Endothelial cell of umbilical vein (primary cell): ENCODE measurements at regions of chr22 and their contacts with region 1.

Region 1: GRCh38 chr22:39319270-39320022 is at the start of gene RPL3:
- DNase-seq: peak; percentile 99
- H3K4me3 ChIP-seq: peak within 1 kb of the TSS; percentile 87 to 98 (median 96)
- H3K27ac ChIP-seq: peak within 1 kb of the TSS; percentile 96
- H3K4me1 ChIP-seq: peaks cover 30% of the 10 kb centered on the region
- H3K27me3 ChIP-seq: no peaks in the 10 kb centered on the region
- CTCF ChIP-seq: peak in 1 of 2 donors; percentile 5
- POLR2A ChIP-seq: peak; percentile 100
- total RNA-seq, gene RPL3: 1,954 and 2,068 TPM in 2 replicates

Region 2: GRCh38 chr22:39003165-39003638 is 316.2 kb before region 1 on chr22:
- CTCF ChIA-PET with region 1: no interaction called
- POLR2A ChIA-PET with region 1: no interaction called
- dilution Hi-C with region 1: no loop called
- intact Hi-C with region 1: loop called (anchors 10 kb)
- DNase-seq: peak; percentile 83
- H3K4me3 ChIP-seq: no peak overlapping the region
- H3K27ac ChIP-seq: no peak overlapping the region
- H3K4me1 ChIP-seq: no peaks in the 10 kb centered on the region
- H3K27me3 ChIP-seq: no peaks in the 10 kb centered on the region
- CTCF ChIP-seq: peak; percentile 67 to 72
- POLR2A ChIP-seq: no peak

Region 3: GRCh38 chr22:39170825-39171622 is 148.4 kb before region 1 on chr22:
- CTCF ChIA-PET with region 1: interaction called, 52 read pairs
- POLR2A ChIA-PET with region 1: interaction called, 7 read pairs
- dilution Hi-C with region 1: no loop called
- intact Hi-C with region 1: loop called (anchors 1 kb)
- DNase-seq: peak; percentile 76
- H3K4me3 ChIP-seq: no peak overlapping the region
- H3K27ac ChIP-seq: peak overlapping the region; percentile 51
- H3K4me1 ChIP-seq: peaks cover 48% of the 10 kb centered on the region
- H3K27me3 ChIP-seq: no peaks in the 10 kb centered on the region
- CTCF ChIP-seq: peak; percentile 86 to 94
- POLR2A ChIP-seq: no peak

Region 4: GRCh38 chr22:39236321-39237317 is 82.8 kb before region 1 on chr22:
- CTCF ChIA-PET with region 1: interaction called, 34 read pairs
- POLR2A ChIA-PET with region 1: interaction called, 31 read pairs
- dilution Hi-C with region 1: no loop called
- intact Hi-C with region 1: no loop called
- DNase-seq: no peak
- H3K4me3 ChIP-seq: no peak overlapping the region
- H3K27ac ChIP-seq: peak overlapping the region; percentile 88
- H3K4me1 ChIP-seq: peaks cover 91% of the 10 kb centered on the region
- H3K27me3 ChIP-seq: no peaks in the 10 kb centered on the region
- CTCF ChIP-seq: no peak
- POLR2A ChIP-seq: peak; percentile 19

Region 5: DNA sequence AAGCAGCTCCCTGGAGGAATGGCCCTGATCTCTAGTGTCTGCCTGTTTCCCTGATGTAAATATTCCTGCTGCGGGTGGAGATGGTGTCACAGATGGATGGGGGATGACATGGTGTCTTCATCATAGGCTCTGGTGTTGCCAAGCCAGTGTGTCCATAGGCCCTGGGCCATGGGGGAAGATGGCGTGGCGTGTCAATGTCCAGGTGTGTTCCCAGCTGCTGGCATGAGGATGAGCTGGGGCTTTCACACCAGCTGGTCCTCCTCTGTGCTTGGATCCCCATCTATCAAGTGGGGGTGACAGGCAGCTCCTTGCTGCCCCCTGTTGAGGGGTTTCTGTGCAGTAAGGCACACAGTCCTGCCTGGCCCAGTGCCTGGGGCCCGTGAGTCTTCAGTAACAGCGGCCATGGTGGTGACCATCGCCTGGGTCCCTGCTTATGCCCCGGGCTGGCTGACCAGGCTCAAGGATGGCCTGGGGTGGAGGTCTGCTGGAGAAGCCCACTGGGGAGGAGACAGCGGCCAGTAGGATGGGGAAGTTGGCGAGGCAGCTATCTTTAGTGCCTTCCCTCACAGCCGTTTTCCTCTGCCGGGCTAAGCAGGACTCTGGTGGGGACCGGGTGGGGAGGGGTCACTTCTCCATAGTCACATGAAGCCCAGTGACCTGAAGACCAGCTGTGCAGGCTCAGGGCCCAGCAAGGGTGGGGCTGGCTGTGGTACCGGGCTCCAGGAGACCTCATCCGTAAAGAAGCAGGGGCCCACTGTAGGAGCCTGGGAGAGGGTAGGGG is 12.7 kb before region 1 on chr22:
- CTCF ChIA-PET with region 1: interaction called, 7 read pairs
- POLR2A ChIA-PET with region 1: interaction called, 15 read pairs
- dilution Hi-C with region 1: no loop called
- intact Hi-C with region 1: no loop called
- DNase-seq: peak; percentile 71
- H3K4me3 ChIP-seq: no peak overlapping the region
- H3K27ac ChIP-seq: no peak overlapping the region
- H3K4me1 ChIP-seq: peaks cover 14% of the 10 kb centered on the region
- H3K27me3 ChIP-seq: no peaks in the 10 kb centered on the region
- CTCF ChIP-seq: peak; percentile 46 to 71
- POLR2A ChIP-seq: no peak

Region 6: DNA sequence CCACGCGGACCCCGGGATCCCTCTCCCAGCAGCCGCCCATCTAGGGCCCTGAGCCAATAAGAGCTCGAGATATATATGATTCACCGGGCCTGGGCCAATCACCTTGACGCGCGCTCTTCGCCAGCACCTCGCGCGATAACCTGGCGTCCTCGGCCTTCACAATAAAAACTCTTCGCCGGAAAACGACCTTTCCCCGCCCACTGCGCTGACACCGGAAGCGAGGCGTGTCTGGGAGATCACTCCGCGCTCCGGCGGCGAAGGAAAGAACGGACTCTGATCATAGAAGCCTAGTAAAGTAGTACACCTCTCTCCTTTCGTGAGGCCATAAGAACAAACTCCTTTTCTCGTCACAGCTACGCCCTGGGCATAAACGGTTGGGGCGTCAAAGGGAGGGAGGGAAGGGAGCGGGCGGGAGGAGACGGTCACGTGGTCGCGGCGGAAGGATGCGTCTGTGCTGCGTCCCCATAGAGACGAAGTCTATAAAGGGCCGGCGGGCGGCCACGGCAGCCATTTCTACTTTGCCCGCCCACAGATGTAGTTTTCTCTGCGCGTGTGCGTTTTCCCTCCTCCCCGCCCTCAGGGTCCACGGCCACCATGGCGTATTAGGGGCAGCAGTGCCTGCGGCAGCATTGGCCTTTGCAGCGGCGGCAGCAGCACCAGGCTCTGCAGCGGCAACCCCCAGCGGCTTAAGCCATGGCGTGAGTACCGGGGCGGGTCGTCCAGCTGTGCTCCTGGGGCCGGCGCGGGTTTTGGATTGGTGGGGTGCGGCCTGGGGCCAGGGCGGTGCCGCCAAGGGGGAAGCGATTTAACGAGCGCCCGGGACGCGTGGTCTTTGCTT is 200.8 kb after region 1 on chr22 and contains the start of gene ATF4:
- CTCF ChIA-PET with region 1: interaction called, 3 read pairs
- POLR2A ChIA-PET with region 1: interaction called, 4 read pairs
- dilution Hi-C with region 1: no loop called
- intact Hi-C with region 1: loop called (anchors 1 kb)
- DNase-seq: peak; percentile 98
- H3K4me3 ChIP-seq: peak within 1 kb of the TSS; percentile 59 to 96 (median 92)
- H3K27ac ChIP-seq: peak within 1 kb of the TSS; percentile 93
- H3K4me1 ChIP-seq: peaks cover 15% of the 10 kb centered on the region
- H3K27me3 ChIP-seq: no peaks in the 10 kb centered on the region
- CTCF ChIP-seq: no peak
- POLR2A ChIP-seq: peak; percentile 97
- total RNA-seq, gene ATF4: 312 and 324 TPM in 2 replicates